ENCODE measurements at regions of chr6 and their contacts with region 1.

Region 1: GRCh38 chr6:28940858-28941680 is 17.3 kb upstream of the TRIM27 start:
- DNase-seq: peak; percentile 86
- H3K4me3 ChIP-seq: peak overlapping the region; percentile 67 to 84 (median 73)
- H3K27ac ChIP-seq: peak overlapping the region; percentile 62
- H3K4me1 ChIP-seq: peaks cover 7% of the 10 kb centered on the region
- H3K27me3 ChIP-seq: no peaks in the 10 kb centered on the region
- CTCF ChIP-seq: no peak

Region 2: DNA sequence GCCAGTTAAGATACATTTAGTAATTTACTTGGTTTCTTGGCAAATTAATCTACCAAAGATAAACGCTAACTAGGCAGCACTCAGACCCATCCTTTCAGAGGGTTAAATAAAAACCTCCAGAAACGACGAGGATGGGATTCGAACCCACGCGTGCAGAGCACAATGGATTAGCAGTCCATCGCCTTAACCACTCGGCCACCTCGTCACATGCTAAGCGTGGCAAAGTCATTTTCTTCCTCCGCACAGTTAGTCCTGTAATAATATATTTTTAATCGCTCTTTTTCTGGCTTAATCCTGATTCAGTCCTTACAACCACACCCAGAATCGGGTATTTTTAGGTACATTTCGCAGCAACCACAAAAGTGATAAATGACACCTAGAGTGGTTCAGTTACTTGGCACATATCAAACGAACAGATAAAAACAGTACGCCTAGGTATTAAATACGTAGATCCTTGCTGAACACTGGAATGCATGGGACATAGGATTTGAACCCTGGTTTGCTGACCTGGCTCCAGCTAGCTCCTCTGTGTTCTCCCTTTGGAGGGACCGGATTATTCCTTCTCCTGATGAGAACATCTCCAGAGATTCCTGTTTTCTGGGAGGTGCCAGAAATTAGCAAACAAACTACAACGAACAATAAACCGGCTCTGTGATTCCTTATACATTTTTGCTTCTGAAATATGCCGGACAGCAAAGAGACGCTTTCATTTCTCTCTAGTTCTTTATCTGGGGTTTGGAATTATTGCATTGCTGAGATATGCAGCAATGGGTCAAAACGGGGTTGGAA is 343.7 kb before region 1 on chr6:
- CTCF ChIA-PET with region 1: no interaction called
- dilution Hi-C with region 1: no loop called
- in situ Hi-C with region 1: no loop called
- intact Hi-C with region 1: loop called (anchors 5 kb)
- DNase-seq: peak; percentile 79
- H3K4me3 ChIP-seq: peak overlapping the region; percentile 46 to 56 (median 50)
- H3K27ac ChIP-seq: peak overlapping the region; percentile 12
- H3K4me1 ChIP-seq: no peaks in the 10 kb centered on the region
- H3K27me3 ChIP-seq: no peaks in the 10 kb centered on the region
- CTCF ChIP-seq: no peak

Region 3: DNA sequence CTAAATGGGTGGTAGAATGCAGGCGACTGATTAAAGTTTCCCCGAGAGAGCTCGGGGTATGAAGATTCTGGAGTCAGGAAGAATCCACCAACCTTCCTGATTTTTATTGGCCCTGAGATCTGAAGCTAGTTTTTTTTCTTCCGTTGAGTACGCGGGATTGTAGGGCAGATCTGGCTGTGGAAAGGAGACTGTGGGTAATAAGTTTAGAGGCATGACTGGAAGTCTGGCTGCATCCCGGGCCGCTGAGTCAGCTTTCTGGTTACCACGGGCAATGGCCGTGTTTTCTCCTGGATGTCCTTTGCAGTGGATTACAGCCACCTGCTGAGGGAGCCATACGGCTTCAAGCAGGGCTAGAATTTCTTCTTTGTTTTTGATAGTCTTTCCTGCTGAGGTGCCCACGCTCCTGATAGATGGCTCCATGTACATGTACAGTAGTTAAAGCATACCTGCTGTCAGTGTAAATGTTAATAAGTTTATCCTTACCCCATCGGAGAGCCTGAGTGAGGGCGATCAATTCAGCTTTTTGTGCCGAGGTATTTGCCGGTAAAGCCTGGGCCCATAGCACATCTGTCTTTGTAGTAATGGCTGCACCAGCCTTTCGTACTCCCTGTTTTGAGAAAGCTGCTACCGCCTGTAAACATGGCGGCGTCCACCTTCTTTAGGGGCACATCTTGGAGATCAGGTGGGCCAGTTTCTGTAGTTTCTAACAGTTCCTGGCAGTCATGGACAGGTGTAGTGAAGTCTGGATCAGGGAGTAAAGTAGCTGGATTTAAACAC is 171.3 kb before region 1 on chr6:
- CTCF ChIA-PET with region 1: no interaction called
- dilution Hi-C with region 1: no loop called
- in situ Hi-C with region 1: no loop called
- intact Hi-C with region 1: loop called (anchors 2 kb)
- DNase-seq: peak; percentile 72
- H3K4me3 ChIP-seq: no peak overlapping the region
- H3K27ac ChIP-seq: no peak overlapping the region
- H3K4me1 ChIP-seq: no peaks in the 10 kb centered on the region
- H3K27me3 ChIP-seq: peaks cover 60% of the 10 kb centered on the region
- CTCF ChIP-seq: peak; percentile 31 to 60

Region 4: GRCh38 chr6:28838634-28839442 is 102.2 kb before region 1 on chr6:
- CTCF ChIA-PET with region 1: no interaction called
- dilution Hi-C with region 1: no loop called
- in situ Hi-C with region 1: no loop called
- intact Hi-C with region 1: loop called (anchors 1 kb)
- DNase-seq: peak; percentile 80
- H3K4me3 ChIP-seq: peak overlapping the region; percentile 73 to 100 (median 78)
- H3K27ac ChIP-seq: no peak overlapping the region
- H3K4me1 ChIP-seq: no peaks in the 10 kb centered on the region
- H3K27me3 ChIP-seq: no peaks in the 10 kb centered on the region
- CTCF ChIP-seq: peak; percentile 37 to 81

Region 5: GRCh38 chr6:28895134-28895812 is 45.8 kb before region 1 on chr6:
- CTCF ChIA-PET with region 1: interaction called, 13 read pairs
- dilution Hi-C with region 1: no loop called
- in situ Hi-C with region 1: no loop called
- intact Hi-C with region 1: loop called (anchors 1 kb)
- DNase-seq: peak; percentile 94
- H3K4me3 ChIP-seq: peak overlapping the region; percentile 64 to 80 (median 76)
- H3K27ac ChIP-seq: peak overlapping the region; percentile 98
- H3K4me1 ChIP-seq: no peaks in the 10 kb centered on the region
- H3K27me3 ChIP-seq: peaks cover 1% of the 10 kb centered on the region
- CTCF ChIP-seq: no peak

Region 6: DNA sequence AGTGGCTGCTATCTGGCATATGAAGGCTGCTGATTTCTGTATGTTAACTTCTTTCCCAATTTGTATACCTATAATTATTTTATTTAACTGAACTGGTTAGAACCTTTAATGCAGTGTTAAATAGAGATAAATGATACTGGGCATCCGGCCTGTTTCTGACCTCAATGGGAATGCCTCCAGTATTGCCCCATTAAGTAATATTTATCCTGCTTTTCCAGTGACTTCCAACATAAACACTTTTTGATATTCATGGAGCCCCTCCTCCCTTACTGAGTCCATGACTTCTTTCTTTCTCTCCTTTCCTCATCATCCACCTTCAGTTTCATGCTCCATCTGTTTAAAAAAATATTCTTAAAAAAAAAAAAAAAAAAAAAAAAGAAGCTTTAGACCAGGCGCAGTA is 26.1 kb before region 1 on chr6:
- CTCF ChIA-PET with region 1: no interaction called
- dilution Hi-C with region 1: no loop called
- in situ Hi-C with region 1: no loop called
- intact Hi-C with region 1: no loop called
- DNase-seq: no peak
- H3K4me3 ChIP-seq: no peak overlapping the region
- H3K27ac ChIP-seq: no peak overlapping the region
- H3K4me1 ChIP-seq: no peaks in the 10 kb centered on the region
- H3K27me3 ChIP-seq: no peaks in the 10 kb centered on the region
- CTCF ChIP-seq: no peak

Region 7: DNA sequence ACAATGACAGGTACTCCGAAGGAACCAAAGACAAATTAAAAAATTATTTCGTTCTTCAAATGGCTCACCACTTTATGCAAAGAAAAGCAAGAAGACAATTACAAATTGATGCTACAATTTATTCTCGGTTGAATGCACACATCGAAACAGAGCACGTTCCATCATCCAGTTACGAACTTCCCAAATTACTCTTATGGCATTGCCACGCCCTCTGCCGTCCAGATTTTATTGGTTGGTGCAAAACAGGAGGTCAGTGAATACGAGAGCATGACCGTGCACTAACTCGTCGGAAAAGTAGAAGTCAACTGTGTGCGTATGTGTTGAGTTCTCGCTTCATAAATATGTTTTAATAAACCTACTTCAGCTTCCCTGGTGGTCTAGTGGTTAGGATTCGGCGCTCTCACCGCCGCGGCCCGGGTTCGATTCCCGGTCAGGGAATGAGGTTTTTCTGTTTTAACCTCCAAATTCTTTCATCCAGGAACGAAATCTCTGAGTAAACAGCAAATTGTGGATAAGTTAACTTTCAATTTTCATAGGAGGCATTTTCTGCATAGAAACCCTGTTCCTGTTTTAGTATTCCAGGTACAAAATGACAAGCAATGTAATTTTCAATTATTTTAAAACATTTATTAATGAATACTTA is 40.9 kb after region 1 on chr6:
- CTCF ChIA-PET with region 1: interaction called, 5 read pairs
- dilution Hi-C with region 1: loop called (anchors 5 kb)
- in situ Hi-C with region 1: no loop called
- intact Hi-C with region 1: loop called (anchors 1 kb)
- DNase-seq: peak; percentile 91
- H3K4me3 ChIP-seq: peak overlapping the region; percentile 92 to 95 (median 95)
- H3K27ac ChIP-seq: peak overlapping the region; percentile 63
- H3K4me1 ChIP-seq: peaks cover 31% of the 10 kb centered on the region
- H3K27me3 ChIP-seq: no peaks in the 10 kb centered on the region
- CTCF ChIP-seq: no peak

Region 8: DNA sequence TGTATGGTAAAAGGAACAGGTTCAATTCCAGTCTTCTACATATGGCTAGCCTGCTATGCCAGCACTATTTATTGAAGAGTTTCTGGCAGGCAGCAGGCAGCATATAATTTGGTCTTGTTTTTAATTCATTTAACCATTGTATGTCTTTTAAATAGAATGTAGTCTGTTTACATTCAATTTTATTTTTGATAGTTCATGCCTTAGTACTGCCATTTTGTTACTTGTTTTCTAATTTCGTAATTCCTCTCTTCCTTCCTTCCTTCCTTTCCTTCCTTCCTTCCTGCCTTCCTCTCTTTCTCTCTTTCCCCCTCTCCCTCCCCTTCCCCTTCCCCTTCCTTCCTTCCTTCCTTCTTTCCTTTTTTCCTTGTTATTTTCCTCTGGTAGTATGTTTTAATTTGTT is 212.0 kb after region 1 on chr6:
- CTCF ChIA-PET with region 1: no interaction called
- dilution Hi-C with region 1: no loop called
- in situ Hi-C with region 1: no loop called
- intact Hi-C with region 1: no loop called
- DNase-seq: no peak
- H3K4me3 ChIP-seq: no peak overlapping the region
- H3K27ac ChIP-seq: no peak overlapping the region
- H3K4me1 ChIP-seq: no peaks in the 10 kb centered on the region
- H3K27me3 ChIP-seq: no peaks in the 10 kb centered on the region
- CTCF ChIP-seq: no peak

Measured in mammary epithelial cell (primary cell).